ENCODE measurements at regions of chr14 and their contacts with region 1.

Region 1: DNA sequence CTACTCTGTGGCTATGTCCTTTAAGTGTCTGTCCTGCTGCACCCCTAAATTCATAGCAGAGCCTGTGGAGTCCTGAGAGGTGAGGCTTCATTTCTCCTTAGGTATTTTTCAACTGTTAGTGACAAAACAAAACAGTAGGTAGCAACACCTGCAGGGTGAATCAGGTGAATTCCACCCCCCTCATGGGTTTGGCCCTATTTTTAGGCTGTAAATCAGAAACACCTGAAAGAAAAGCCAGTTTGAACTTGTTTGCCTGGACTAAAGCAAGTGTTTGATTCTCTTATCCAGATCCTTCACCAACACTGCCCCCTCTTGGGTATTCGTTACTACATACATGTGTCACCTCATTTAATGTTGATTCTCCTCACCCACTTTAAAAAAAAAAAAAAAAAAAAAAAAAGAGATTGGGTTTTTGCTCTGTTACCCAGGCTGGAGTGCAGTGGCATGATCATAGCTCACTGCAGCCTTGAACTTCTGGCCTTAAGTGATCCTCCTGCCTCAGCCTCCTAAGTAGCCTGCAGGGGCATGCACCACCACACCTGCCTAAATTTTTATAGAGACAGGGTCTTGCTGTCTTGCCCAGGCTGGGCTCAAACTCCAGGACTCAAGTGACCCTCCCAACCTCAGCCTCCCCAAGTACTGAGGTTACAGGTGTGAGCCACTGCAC is 10.3 kb downstream of the TBPL2 start:
- DNase-seq: peak; percentile 31
- H3K4me3 Mint-ChIP-seq: no peak overlapping the region
- H3K27ac Mint-ChIP-seq: no peak overlapping the region
- H3K4me1 Mint-ChIP-seq: peaks cover 20% of the 10 kb centered on the region
- H3K27me3 Mint-ChIP-seq: no peaks in the 10 kb centered on the region

Region 2: GRCh38 chr14:55212634-55213033 is 217.5 kb before region 1 on chr14:
- intact Hi-C with region 1: loop called (anchors 1 kb)
- DNase-seq: no peak
- H3K4me3 Mint-ChIP-seq: no peak overlapping the region
- H3K27ac Mint-ChIP-seq: no peak overlapping the region
- H3K4me1 Mint-ChIP-seq: peaks cover 5% of the 10 kb centered on the region
- H3K27me3 Mint-ChIP-seq: peaks cover 3% of the 10 kb centered on the region

Region 3: GRCh38 chr14:55245657-55246268 is 184.4 kb before region 1 on chr14:
- intact Hi-C with region 1: loop called (anchors 2 kb)
- DNase-seq: no peak
- H3K4me3 Mint-ChIP-seq: no peak overlapping the region
- H3K27ac Mint-ChIP-seq: no peak overlapping the region
- H3K4me1 Mint-ChIP-seq: no peaks in the 10 kb centered on the region
- H3K27me3 Mint-ChIP-seq: peaks cover 43% of the 10 kb centered on the region

Region 4: GRCh38 chr14:55556929-55557623 is 126.9 kb after region 1 on chr14:
- intact Hi-C with region 1: no loop called
- DNase-seq: no peak
- H3K4me3 Mint-ChIP-seq: no peak overlapping the region
- H3K27ac Mint-ChIP-seq: no peak overlapping the region
- H3K4me1 Mint-ChIP-seq: peaks cover 4% of the 10 kb centered on the region
- H3K27me3 Mint-ChIP-seq: peaks cover 2% of the 10 kb centered on the region

Region 5: DNA sequence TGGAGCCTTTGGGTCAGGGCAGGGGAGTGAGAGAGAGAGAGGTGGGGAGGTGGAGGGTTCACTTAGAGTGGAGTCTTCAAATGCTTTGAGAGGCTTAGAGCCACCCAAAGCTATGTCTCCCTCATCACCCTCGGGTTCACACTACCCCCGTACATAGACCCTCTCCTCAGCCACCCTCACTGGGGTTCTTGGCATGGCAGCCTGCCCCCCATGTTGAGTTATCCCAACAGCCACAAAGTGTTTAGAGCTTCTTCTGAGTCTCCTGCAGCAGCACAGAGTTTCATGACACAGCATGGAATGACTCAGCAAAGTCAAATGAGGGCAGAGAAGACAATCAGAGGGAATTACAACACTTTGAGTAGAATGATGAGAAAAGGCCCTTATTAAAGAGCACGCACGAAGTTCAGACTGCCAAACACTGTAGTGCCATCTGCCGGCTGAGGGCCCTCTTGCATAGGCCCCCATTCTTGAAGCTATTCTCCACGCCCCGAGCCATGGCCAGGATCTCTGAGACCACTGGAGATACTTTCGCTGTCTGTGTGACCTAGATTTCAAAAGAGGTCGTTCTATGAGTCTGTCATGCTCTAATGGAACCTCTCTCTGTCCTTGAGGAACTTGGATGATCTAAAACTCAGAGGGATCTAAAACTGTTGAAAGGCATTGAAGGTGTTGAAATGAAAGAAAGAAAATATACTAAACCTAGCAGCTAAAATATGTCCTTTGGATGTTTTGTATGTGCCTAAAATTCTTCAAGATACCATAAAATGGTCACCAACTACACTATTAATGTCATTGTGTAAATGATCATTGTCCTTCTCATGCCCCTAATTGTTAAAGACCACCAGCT is 909.9 kb after region 1 on chr14:
- intact Hi-C with region 1: loop called (anchors 10 kb)
- DNase-seq: peak; percentile 36
- H3K4me3 Mint-ChIP-seq: no peak overlapping the region
- H3K27ac Mint-ChIP-seq: no peak overlapping the region
- H3K4me1 Mint-ChIP-seq: peaks cover 8% of the 10 kb centered on the region
- H3K27me3 Mint-ChIP-seq: no peaks in the 10 kb centered on the region

Measured in activated T-helper 2 cell treated with anti-CD3 and anti-CD28 coated beads, Interferon-gamma antibody, Interleukin-2, Interleukin-4, amounts not matched to agents 10 μg/mL and 5 μg/mL and 100 μg/mL, durations not matched to agents 14 hours and 24 hours and 36 hours (primary cell).